Activated CD4-positive, alpha-beta T cell treated with anti-CD3 and anti-CD28 coated beads for 36 hours (primary cell): ENCODE measurements at regions of chr16 and their contacts with region 1.

Region 1: GRCh38 chr16:68085259-68086071 is at the start of gene NFATC3:
- DNase-seq: peak; percentile 100
- ATAC-seq: peak; percentile 62
- H3K4me3 Mint-ChIP-seq: peak within 1 kb of the TSS; percentile 89
- H3K27ac Mint-ChIP-seq: peak within 1 kb of the TSS; percentile 94
- H3K4me1 Mint-ChIP-seq: peaks cover 64% of the 10 kb centered on the region
- H3K27me3 Mint-ChIP-seq: no peaks in the 10 kb centered on the region
- total RNA-seq, gene NFATC3: 68.4 to 81.2 TPM

Region 2: DNA sequence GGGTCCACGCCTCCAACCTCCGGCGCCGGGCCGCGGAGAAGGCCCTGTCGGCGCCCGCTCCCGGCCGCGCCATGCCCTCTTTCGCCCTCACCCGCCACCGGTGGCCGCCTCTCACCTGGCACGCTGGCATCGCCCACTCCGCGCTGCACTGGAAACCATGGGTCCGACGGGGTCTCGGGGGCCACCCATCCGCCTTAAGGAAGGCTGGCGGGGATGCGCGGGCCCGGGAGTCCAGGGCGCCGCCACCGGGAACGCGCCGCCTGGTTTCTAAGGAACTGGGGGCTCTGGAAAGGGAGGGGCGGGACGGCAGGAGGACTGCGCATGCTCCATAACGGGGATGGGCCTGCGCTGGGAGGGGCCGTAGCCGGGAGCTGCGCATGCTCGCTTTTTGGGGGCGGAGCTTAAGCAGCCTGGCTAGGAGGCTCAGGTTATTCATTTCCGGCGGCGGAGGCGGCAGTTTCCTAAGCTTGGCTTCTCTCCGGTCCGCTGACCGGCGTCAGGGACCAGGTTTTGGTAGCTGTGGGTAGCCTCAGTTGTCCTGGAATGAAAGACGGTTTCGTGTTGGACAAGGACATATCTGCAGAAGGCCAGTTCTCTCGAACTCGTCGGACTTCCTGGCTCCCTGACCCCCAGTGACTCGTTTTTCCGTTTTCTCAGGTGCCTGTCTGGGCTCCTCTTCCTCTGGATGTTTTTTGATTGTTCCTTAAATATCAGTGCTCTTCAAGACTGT is 366.3 kb before region 1 on chr16 and contains the start of gene GFOD2:
- CTCF ChIA-PET with region 1: no interaction called
- POLR2A ChIA-PET with region 1: no interaction called
- intact Hi-C with region 1: loop called in 1 of 2 experiments (anchors 1 kb)
- DNase-seq: peak; percentile 99
- ATAC-seq: peak; percentile 95
- H3K4me3 Mint-ChIP-seq: peak within 1 kb of the TSS; percentile 82
- H3K27ac Mint-ChIP-seq: peak within 1 kb of the TSS; percentile 98
- H3K4me1 Mint-ChIP-seq: peaks cover 29% of the 10 kb centered on the region
- H3K27me3 Mint-ChIP-seq: no peaks in the 10 kb centered on the region
- total RNA-seq, gene GFOD2: 8.7 to 11.5 TPM

Region 3: DNA sequence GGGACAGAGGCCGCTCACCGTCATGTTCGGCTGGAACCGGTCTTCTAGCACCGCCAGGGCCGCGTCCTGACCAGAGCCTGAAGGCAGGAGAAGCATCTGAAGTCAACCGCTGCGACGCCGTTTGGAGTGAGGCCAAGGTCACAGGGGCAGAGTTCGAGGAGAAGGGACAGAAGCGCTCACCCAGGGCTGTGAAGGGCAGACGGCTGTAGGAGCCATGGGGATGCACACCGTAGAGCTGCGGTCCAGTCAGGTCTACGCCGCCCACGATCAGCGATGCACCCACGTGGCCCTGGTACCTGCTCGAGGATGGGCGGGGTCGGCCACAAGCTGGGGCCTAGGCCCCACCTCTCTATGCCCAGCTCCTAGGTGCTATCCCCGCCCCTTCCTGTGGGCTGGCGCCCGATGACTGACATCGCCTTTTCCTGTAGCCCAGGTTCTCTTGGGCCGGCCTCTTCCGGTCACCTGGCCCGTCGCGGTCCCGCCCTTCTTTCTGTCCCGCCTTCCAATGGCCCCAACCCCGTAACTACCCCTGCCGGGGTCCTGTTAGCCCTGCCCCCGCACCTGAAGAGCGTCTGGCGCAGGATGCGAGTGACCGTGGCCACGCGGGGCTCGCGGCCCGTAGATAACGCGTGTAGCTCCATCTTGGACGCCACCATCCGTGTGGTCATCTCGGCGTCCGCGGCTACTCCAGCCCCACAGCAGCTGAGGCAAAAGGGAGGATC is 149.9 kb before region 1 on chr16:
- CTCF ChIA-PET with region 1: no interaction called
- POLR2A ChIA-PET with region 1: interaction called, 4 read pairs
- intact Hi-C with region 1: loop called (anchors 1 to 2 kb)
- DNase-seq: peak; percentile 98
- ATAC-seq: peak; percentile 91
- H3K4me3 Mint-ChIP-seq: peak overlapping the region; percentile 100
- H3K27ac Mint-ChIP-seq: peak overlapping the region; percentile 100
- H3K4me1 Mint-ChIP-seq: peaks cover 37% of the 10 kb centered on the region
- H3K27me3 Mint-ChIP-seq: no peaks in the 10 kb centered on the region

Region 4: GRCh38 chr16:68116256-68116867 is 30.9 kb after region 1 on chr16:
- CTCF ChIA-PET with region 1: interaction called, 12 read pairs
- POLR2A ChIA-PET with region 1: no interaction called
- intact Hi-C with region 1: no loop called
- DNase-seq: no peak
- ATAC-seq: peak; percentile 48
- H3K4me3 Mint-ChIP-seq: no peak overlapping the region
- H3K27ac Mint-ChIP-seq: no peak overlapping the region
- H3K4me1 Mint-ChIP-seq: peaks cover 87% of the 10 kb centered on the region
- H3K27me3 Mint-ChIP-seq: no peaks in the 10 kb centered on the region

Region 5: GRCh38 chr16:68310761-68311511 is 225.5 kb after region 1 on chr16 and contains the starts of genes PRMT7 and SLC7A6OS:
- CTCF ChIA-PET with region 1: no interaction called
- POLR2A ChIA-PET with region 1: interaction called, 7 read pairs
- intact Hi-C with region 1: loop called in 1 of 2 experiments (anchors 1 kb)
- DNase-seq: peak; percentile 97
- ATAC-seq: peak; percentile 99
- H3K4me3 Mint-ChIP-seq: peak within 1 kb of the TSS; percentile 90
- H3K27ac Mint-ChIP-seq: peak within 1 kb of the TSS; percentile 92
- H3K4me1 Mint-ChIP-seq: peaks cover 42% of the 10 kb centered on the region
- H3K27me3 Mint-ChIP-seq: no peaks in the 10 kb centered on the region
- total RNA-seq, gene PRMT7: 62.7 to 70.7 TPM
- total RNA-seq, gene SLC7A6OS: 17.4 to 21.7 TPM

Region 6: GRCh38 chr16:69565671-69566239 is 1480.3 kb after region 1 on chr16 and contains the start of gene NFAT5:
- CTCF ChIA-PET with region 1: no interaction called
- POLR2A ChIA-PET with region 1: no interaction called
- intact Hi-C with region 1: loop called in 1 of 2 experiments (anchors 10 kb)
- DNase-seq: peak; percentile 94
- ATAC-seq: peak; percentile 25
- H3K4me3 Mint-ChIP-seq: peak within 1 kb of the TSS; percentile 99
- H3K27ac Mint-ChIP-seq: peak within 1 kb of the TSS; percentile 99
- H3K4me1 Mint-ChIP-seq: peaks cover 54% of the 10 kb centered on the region
- H3K27me3 Mint-ChIP-seq: no peaks in the 10 kb centered on the region
- total RNA-seq, gene NFAT5: 29.6 to 37.9 TPM